Panc1 (cell line): ENCODE measurements at regions of chr9 and their contacts with region 1.

Region 1: GRCh38 chr9:78365748-78366697 is 69.1 kb downstream of the PSAT1 start:
- DNase-seq: no peak
- ATAC-seq: no peak
- H3K4me3 ChIP-seq: no peak overlapping the region
- H3K27ac ChIP-seq: no peak overlapping the region
- H3K4me1 ChIP-seq: no peaks in the 10 kb centered on the region
- H3K27me3 ChIP-seq: no peaks in the 10 kb centered on the region
- CTCF ChIP-seq: peak; percentile 59; the same call in 1 of the 2 replicates

Region 2: GRCh38 chr9:78261403-78262001 is 104.5 kb before region 1 on chr9:
- CTCF ChIA-PET with region 1: interaction called, 3 read pairs
- POLR2A ChIA-PET with region 1: no interaction called
- in situ Hi-C with region 1: no loop called
- intact Hi-C with region 1: loop called (anchors 2 kb)
- DNase-seq: no peak
- ATAC-seq: no peak
- H3K4me3 ChIP-seq: no peak overlapping the region
- H3K27ac ChIP-seq: no peak overlapping the region
- H3K4me1 ChIP-seq: no peaks in the 10 kb centered on the region
- H3K27me3 ChIP-seq: no peaks in the 10 kb centered on the region
- CTCF ChIP-seq: peak; percentile 46; the same call in 1 of the 2 replicates